Activated CD4-positive, alpha-beta memory T cell treated with anti-CD3 and anti-CD28 coated beads, Interleukin-2, amount 10 ng/mL, durations not matched to agents 7 days and 5 days (primary cell): ENCODE measurements at regions of chr5 and their contacts with region 1.

Region 1: DNA sequence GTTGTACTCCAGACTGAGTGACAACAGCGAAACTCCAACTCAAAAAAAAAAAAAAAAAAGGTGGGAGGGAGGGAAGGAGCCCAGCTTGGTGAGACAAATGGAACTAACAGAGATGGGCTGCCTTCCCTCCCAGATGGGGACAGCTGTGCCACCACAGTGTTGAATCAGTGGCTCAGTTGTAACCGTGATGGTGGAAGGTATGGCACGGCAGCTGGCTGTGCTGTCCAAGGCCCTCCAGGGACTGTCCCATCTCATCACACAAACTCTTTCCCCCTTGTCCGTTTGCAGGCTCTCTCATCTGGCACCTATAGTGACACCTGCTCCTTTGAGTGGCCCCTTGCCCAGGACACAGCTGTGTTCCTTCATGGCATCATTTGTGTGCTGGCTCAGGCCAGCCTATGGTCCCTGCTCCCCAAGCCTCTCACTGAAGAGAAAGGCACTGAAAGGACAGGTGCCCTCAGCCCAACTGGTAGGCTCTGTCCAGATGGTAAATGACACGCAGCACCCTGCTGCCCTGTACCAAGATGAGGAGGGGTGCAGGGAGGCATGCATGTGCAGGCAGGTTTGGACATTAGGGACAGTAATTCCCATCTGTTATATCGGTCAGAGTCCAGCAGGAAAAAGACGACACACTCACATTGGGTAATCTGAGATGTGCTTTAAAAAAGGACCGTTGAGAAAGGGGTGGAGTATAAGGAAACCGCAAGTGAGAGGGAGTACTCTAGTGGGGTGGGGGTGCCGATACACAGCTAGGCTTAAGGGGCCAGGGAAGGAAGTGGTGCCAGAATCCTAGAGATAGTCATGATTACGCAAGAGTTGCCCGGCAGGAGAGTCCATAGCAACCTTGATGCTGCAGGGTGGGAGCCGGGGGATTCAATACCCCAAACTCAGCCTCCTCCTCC is 4.3 kb downstream of the SMIM33 start:
- DNase-seq: no peak
- H3K4me3 Mint-ChIP-seq: peak overlapping the region; percentile 3
- H3K27ac Mint-ChIP-seq: peak overlapping the region; percentile 80
- H3K4me1 Mint-ChIP-seq: peaks cover 88% of the 10 kb centered on the region
- H3K27me3 Mint-ChIP-seq: no peaks in the 10 kb centered on the region

Region 2: DNA sequence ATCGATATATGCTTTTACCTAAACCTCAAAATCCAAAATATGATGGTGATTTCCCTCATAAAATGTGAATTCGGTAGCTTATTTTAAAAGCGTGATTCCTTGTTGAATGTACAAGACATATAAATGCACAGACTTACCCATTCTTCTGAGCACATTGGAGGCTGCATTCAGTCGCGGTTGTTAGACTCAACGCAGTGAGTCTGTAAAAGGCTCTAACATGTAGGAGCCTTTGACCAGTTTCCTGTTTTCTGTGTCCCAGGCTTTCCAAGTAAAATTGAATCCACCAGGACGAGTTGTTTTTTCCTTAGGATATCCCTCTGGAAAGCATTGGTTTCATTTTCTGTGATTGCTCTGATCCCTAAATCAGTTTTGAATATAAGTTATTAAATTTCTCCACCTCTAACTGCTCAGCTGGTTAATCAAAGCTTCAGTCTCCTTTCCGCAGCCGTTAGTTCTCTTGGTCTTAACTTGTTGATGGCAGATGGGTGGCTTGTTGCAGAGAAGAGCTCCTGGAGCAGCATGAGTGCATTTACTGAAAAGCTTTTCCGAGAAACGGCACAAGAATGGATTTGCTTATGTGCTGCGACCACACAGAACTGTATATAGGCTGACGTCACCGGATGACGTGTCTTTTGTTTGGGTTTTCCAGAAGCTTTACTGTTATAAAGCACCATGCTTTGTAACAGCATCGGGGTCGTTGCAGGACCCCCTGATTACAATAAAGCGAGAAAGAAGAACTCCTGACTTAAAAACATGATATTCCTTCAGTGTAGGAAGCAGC is 600.2 kb before region 1 on chr5 and contains the start of gene LRRTM2:
- CTCF ChIA-PET with region 1: no interaction called
- POLR2A ChIA-PET with region 1: no interaction called
- DNase-seq: no peak
- H3K4me3 Mint-ChIP-seq: no peak within 1 kb of the TSS
- H3K27ac Mint-ChIP-seq: no peak within 1 kb of the TSS
- H3K4me1 Mint-ChIP-seq: peaks cover 8% of the 10 kb centered on the region
- H3K27me3 Mint-ChIP-seq: peaks cover 7% of the 10 kb centered on the region
- total RNA-seq, gene LRRTM2: 0.23 TPM in 1 of 2 experiments, not detected in the other

Region 3: DNA sequence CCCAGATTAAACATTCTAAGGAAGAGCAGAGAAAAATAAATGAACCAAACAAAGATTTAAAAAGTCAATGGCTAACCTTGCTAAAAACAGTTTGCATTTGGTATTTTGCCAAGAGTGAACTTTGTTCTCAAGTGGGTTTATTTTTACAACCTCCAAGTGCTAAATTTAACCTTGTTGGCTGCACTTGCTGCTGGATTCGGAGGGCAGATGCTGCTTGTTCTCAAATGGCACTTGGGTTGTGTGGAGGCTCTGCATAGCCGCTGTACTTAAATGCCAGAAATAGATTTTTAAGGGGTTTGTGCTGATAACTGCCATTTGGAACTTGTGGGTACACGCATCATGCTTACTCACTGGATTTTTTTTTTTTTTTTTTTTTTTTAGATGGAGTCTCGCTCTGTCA is 57.9 kb before region 1 on chr5:
- CTCF ChIA-PET with region 1: interaction called, 23 read pairs
- POLR2A ChIA-PET with region 1: interaction called, 27 read pairs
- DNase-seq: no peak
- H3K4me3 Mint-ChIP-seq: no peak overlapping the region
- H3K27ac Mint-ChIP-seq: peak overlapping the region; percentile 93
- H3K4me1 Mint-ChIP-seq: peaks cover 83% of the 10 kb centered on the region
- H3K27me3 Mint-ChIP-seq: no peaks in the 10 kb centered on the region

Region 4: GRCh38 chr5:139422307-139422893 is 52.7 kb before region 1 on chr5:
- CTCF ChIA-PET with region 1: interaction called, 23 read pairs
- POLR2A ChIA-PET with region 1: interaction called, 9 read pairs
- DNase-seq: peak; percentile 59
- H3K4me3 Mint-ChIP-seq: no peak overlapping the region
- H3K27ac Mint-ChIP-seq: peak overlapping the region; percentile 36
- H3K4me1 Mint-ChIP-seq: peaks cover 46% of the 10 kb centered on the region
- H3K27me3 Mint-ChIP-seq: no peaks in the 10 kb centered on the region

Region 5: GRCh38 chr5:139458580-139459406 is 16.3 kb before region 1 on chr5:
- CTCF ChIA-PET with region 1: interaction called, 3 read pairs
- POLR2A ChIA-PET with region 1: interaction called, 32 read pairs
- DNase-seq: peak; percentile 90
- H3K4me3 Mint-ChIP-seq: peak overlapping the region; percentile 68
- H3K27ac Mint-ChIP-seq: peak overlapping the region; percentile 98
- H3K4me1 Mint-ChIP-seq: peaks cover 68% of the 10 kb centered on the region
- H3K27me3 Mint-ChIP-seq: no peaks in the 10 kb centered on the region